Adrenal gland (tissue), 19 donors: ENCODE measurements at regions of chr11 and their contacts with region 1.

Region 1: GRCh38 chr11:83819933-83820549 is 533.9 kb upstream of the CCDC90B start:
- DNase-seq: peak in 3 of 7 donors; percentile 18 to 49 (median 37)
- H3K4me3 ChIP-seq: no peak overlapping the region
- H3K27ac ChIP-seq: no peak overlapping the region
- H3K4me1 ChIP-seq: peaks cover 0 to 6% of the 10 kb centered on the region in 2 donors
- H3K27me3 ChIP-seq: no peaks in the 10 kb centered on the region
- CTCF ChIP-seq: peak; percentile 29 to 82 (median 72)
- POLR2A ChIP-seq: no peak

Region 2: DNA sequence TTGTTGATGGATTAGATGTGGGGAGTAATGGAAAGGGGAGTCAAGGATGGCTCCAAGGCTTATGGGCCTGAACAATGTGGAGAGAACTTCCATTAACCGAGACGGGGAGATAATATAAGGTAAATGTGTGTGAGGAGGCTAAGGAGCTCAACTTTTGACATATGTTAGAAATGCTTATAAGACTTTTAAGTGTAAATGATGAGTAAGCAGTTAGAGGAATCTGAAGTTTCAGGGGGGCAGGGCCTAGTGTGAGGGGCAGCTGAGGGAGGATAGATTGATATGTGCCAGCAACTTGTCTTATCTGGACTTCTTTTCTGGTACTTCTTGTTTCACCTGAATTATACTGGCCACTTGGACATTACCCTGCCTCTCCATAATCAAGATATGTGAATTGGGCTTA is 596.6 kb before region 1 on chr11:
- intact Hi-C with region 1: no loop called
- DNase-seq: no peak
- H3K4me3 ChIP-seq: no peak overlapping the region
- H3K27ac ChIP-seq: no peak overlapping the region
- H3K4me1 ChIP-seq: no peaks in the 10 kb centered on the region
- H3K27me3 ChIP-seq: no peaks in the 10 kb centered on the region
- CTCF ChIP-seq: no peak
- POLR2A ChIP-seq: no peak

Region 3: GRCh38 chr11:83292709-83293456 is 527.2 kb before region 1 on chr11:
- intact Hi-C with region 1: loop called (anchors 5 to 10 kb)
- DNase-seq: peak; percentile 36 to 74 (median 68)
- H3K4me3 ChIP-seq: no peak overlapping the region
- H3K27ac ChIP-seq: no peak overlapping the region
- H3K4me1 ChIP-seq: peaks cover 0 to 5% of the 10 kb centered on the region in 2 donors
- H3K27me3 ChIP-seq: no peaks in the 10 kb centered on the region
- CTCF ChIP-seq: peak; percentile 69 to 87 (median 80)
- POLR2A ChIP-seq: no peak